ENCODE measurements at regions of chr19 and their contacts with region 1.

Region 1: DNA sequence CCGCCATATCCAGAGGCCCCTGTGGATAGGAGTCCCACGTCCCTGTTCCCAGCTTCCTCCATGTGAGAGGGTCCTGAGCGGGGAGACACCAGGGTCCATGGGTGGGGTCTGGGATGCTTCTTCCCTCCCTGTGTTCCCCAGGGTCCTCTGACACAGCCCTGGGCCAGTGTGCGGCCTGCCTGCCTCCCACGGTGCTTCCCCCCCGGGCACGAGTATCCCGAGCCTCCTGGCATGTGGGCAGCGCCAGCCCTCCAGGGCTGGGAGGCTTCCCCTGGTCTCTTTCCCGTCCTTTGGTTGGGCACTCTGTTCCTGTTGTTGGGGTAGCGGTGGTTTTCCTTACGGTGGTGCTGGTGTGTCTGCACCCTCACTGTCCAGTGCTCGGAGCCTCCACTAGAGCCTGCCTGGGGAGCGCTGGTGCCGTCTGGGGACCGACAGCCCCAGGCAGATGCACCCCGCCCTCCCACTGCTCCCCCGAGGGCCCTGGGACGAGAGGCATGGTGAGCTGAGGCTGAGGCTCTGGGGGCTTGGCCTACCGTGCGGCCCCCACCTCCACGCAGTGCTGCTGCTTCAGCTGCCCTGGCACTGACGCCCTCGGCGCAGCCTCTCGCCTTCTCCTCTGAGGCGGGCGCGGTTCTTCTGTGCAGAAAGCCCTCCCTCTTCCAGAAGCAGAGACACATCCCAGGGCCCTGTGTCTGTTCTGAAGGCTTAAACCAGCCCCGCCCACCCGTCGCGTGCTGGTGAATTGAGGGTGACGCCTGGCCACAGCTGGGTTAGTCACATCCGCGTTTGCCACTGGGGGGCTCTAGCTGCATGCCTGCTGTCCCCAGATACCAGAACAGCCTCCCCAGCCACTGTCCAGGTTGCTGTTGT is 27.9 kb downstream of the PLEKHJ1 start:
- DNase-seq: no peak

Region 2: GRCh38 chr19:2123682-2124387 is 84.4 kb before region 1 on chr19:
- in situ Hi-C with region 1: loop called (anchors 25 kb)
- DNase-seq: no peak